ENCODE measurements at regions of chr9 and their contacts with region 1.

Region 1: DNA sequence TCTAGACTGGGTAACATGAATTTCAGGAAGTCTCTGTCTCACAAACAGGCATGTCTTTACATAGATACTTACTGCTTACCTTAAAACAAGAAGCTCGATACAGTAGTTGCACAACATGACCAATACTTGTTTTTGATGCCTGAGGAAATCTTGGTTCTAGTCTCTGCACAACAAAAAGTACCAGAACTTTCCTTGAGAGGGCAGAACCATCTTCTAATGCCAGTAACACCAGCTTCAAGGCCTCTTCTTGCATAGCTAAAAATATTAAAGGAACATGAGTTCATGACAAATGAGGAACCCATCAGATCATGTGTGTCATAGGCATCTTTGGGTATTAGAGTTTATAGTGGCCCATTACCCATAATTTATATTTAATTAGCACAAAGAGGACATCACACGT is 22.0 kb downstream of the RC3H2 start:
- DNase-seq: no peak
- H3K4me3 ChIP-seq: no peak overlapping the region
- H3K27ac ChIP-seq: no peak overlapping the region
- H3K4me1 ChIP-seq: no peaks in the 10 kb centered on the region
- CTCF ChIP-seq: no peak

Region 2: GRCh38 chr9:122846371-122846940 is 36.7 kb before region 1 on chr9:
- CTCF ChIA-PET with region 1: no interaction called
- POLR2A ChIA-PET with region 1: no interaction called
- intact Hi-C with region 1: loop called (anchors 5 kb)
- DNase-seq: no peak
- H3K4me3 ChIP-seq: no peak overlapping the region
- H3K27ac ChIP-seq: no peak overlapping the region
- H3K4me1 ChIP-seq: no peaks in the 10 kb centered on the region
- CTCF ChIP-seq: no peak

Region 3: GRCh38 chr9:123058834-123059233 is 175.7 kb after region 1 on chr9:
- CTCF ChIA-PET with region 1: no interaction called
- POLR2A ChIA-PET with region 1: no interaction called
- intact Hi-C with region 1: no loop called
- DNase-seq: no peak
- H3K4me3 ChIP-seq: no peak overlapping the region
- H3K27ac ChIP-seq: no peak overlapping the region
- H3K4me1 ChIP-seq: no peaks in the 10 kb centered on the region
- CTCF ChIP-seq: no peak

Measured in OCI-LY7 (cell line).